ENCODE measurements at regions of chr11 and their contacts with region 1.

Region 1: DNA sequence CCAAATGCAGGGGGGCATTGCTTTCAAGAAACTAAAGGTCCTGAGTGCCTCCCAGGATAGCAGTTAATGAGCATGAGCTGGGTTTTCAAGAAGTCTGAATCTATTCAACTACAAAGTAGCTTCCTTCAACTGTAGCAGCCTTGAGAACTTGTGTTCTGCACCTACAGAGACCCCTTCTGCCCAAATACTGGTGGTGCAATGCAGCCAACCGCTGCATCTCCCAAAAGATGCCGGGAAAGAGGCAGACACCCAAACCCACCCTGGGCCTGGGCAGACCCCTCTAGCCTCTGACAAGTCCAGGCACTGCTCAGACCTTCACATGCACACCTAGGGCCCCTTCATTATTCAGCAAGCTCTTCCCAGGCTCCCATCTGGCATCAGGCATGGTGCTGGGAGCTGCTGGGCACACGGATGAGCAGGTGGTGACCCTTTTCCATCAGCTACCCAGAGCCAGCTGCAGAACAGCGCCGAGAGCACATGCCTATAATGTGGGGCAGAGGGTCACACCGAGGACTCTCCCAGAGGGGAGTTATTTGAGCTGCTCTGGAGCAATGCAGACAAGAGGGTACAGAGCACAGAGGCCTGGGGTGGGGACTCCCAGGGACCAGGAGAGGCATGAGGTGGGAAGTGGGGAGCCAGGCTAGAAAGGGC is 44.9 kb upstream of the ETS1 start:
- DNase-seq: no peak
- H3K4me3 ChIP-seq: no peak overlapping the region
- H3K27ac ChIP-seq: no peak overlapping the region
- H3K4me1 ChIP-seq: peaks cover 0 to 12% (median 4%) of the 10 kb centered on the region in 4 donors
- H3K27me3 ChIP-seq: peaks cover 0 to 5% of the 10 kb centered on the region in 2 donors
- CTCF ChIP-seq: peak; percentile 41 to 55

Region 2: DNA sequence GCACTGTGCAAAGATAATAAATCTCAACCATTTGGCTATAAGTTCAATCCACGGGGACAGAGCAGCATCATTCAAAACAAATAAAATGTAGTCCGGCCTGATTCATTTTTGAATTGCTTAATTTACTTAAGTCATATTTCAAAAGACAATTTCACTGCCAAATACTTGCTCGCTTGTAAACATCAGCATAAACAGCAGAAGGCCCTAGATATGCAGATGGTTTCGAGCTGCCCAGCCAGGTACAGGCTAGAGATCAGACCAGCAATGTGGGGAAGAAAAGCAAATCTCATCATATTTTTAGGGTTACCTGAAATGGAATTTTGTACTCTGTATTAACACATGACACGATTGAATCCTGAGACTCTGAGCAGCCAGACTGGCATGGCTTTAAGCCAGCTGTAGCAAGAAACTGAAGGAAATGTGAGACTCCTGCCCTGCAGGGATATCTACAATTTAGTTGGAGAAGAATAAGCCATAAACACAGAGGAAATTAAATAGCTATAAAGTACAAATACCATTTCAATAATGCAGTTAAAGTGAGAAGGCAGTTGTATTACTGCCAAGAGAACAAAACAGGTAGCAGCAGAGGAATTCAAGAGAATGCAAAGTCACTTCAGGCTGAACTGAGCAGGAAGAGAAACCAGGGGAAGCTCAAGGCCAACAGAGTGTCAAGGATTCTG is 485.2 kb before region 1 on chr11:
- intact Hi-C with region 1: no loop called
- DNase-seq: no peak
- H3K4me3 ChIP-seq: no peak overlapping the region
- H3K27ac ChIP-seq: no peak overlapping the region
- H3K4me1 ChIP-seq: no peaks in the 10 kb centered on the region
- H3K27me3 ChIP-seq: no peaks in the 10 kb centered on the region
- CTCF ChIP-seq: no peak

Region 3: GRCh38 chr11:128290106-128290840 is 342.0 kb before region 1 on chr11:
- intact Hi-C with region 1: loop called (anchors 2 kb)
- DNase-seq: peak; percentile 47 to 67
- H3K4me3 ChIP-seq: no peak overlapping the region
- H3K27ac ChIP-seq: peak overlapping the region; percentile 14 to 15
- H3K4me1 ChIP-seq: peaks cover 0 to 34% (median 17%) of the 10 kb centered on the region in 4 donors
- H3K27me3 ChIP-seq: no peaks in the 10 kb centered on the region
- CTCF ChIP-seq: peak; percentile 84 to 85